ENCODE measurements at regions of chr2 and their contacts with region 1.

Region 1: DNA sequence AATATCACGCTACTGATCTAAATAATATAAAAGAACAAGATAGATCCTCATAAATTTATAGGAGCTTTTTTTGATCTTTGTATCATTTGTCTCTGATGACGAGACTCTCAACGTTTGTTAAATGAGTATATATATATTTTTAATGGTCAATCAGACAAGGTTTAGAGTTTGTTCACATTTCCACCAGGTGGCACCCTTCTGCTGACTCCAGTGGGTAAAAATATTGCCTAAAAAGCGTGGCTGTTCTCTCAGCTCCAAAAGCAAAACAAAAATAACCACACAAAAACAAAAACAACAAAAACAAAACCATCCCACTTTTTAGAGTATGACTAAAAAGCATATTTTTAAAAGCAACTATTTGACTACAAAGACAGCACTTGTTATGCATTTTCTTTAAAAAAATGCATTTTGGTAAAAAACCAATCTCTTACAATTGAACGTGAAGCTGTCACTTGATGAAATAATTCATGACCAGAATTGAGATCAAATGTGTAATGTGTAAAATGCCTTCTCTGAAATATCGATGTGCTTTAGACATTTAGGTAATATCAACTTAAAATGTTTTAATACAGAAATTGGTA is 723.2 kb downstream of the DPP10 start:
- DNase-seq: peak; percentile 58 to 66
- H3K4me3 ChIP-seq: no peak overlapping the region
- H3K4me1 ChIP-seq: peaks cover 32% of the 10 kb centered on the region
- H3K27me3 ChIP-seq: no peaks in the 10 kb centered on the region

Region 2: GRCh38 chr2:114729026-114729425 is 436.6 kb before region 1 on chr2:
- in situ Hi-C with region 1: loop called (anchors 25 kb)
- DNase-seq: peak; percentile 18 to 68
- H3K4me3 ChIP-seq: no peak overlapping the region
- H3K4me1 ChIP-seq: peaks cover 14% of the 10 kb centered on the region
- H3K27me3 ChIP-seq: no peaks in the 10 kb centered on the region

Region 3: DNA sequence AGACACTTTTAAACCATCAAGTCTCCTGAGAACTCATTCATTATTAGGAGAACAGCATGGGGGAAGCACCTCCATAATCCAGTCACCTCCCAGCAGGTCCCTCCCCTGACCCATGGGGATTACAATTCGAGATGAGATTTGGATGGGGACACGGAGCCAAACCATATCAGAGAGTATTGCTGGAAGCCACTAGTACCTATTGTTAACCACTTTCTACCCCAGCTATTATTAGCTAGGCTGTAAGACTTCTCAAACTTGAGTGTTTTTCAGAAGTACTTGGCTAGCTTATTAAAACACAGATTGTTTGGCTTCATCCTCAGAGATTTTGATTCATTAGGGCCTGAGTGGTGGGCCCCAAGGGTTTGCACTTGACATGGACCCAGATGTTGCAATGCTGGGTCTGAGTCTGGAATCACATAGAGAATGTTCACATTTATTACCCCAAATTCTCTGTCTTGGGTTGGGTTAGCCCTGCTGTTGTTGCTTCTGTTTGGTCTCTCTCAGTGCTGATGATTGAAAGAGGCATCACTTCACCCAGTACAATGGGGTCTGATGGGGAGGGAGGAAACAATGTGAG is 216.3 kb before region 1 on chr2:
- in situ Hi-C with region 1: loop called (anchors 10 kb)
- DNase-seq: no peak
- H3K4me3 ChIP-seq: no peak overlapping the region
- H3K4me1 ChIP-seq: peaks cover 4% of the 10 kb centered on the region
- H3K27me3 ChIP-seq: no peaks in the 10 kb centered on the region

Region 4: GRCh38 chr2:115480741-115481140 is 315.1 kb after region 1 on chr2:
- in situ Hi-C with region 1: no loop called
- DNase-seq: no peak
- H3K4me3 ChIP-seq: no peak overlapping the region
- H3K4me1 ChIP-seq: no peaks in the 10 kb centered on the region
- H3K27me3 ChIP-seq: no peaks in the 10 kb centered on the region

Measured in HAP-1 (cell line).